ENCODE measurements at regions of chr1 and their contacts with region 1.

Region 1: DNA sequence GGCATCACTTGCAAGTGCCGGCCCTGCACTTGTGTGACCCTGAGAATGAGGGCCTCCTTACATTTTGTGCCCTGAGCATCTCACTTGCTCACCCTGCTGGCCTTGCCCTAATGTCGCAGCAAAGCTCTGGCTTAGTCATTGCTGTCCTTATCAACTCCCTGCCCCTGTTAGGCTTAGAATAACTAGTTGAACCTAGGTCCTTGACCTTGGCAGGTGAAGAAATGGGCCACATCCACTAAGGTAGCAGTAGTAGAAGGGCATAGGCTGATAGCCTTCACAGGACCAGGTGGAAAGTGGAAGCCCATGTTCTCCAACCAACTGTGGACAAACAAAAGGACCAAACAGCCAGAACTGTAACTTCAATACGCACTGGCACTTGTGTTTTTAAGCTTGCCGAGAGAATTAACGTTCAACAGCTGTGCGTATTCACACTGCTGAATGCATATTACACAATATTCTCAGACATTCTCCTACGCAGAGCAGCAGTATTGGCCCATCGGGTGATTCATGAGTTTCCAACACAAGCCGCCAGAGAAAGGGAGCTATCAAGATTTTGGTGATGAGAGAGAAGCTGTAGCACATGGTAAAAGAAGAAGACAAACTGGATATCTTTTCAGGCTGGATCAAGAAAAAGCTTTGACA is 27.7 kb upstream of the PTGFRN start:
- DNase-seq: peak; percentile 77
- H3K4me3 Mint-ChIP-seq: no peak overlapping the region
- H3K27ac Mint-ChIP-seq: no peak overlapping the region
- H3K4me1 Mint-ChIP-seq: peaks cover 12% of the 10 kb centered on the region
- H3K27me3 Mint-ChIP-seq: no peaks in the 10 kb centered on the region

Region 2: DNA sequence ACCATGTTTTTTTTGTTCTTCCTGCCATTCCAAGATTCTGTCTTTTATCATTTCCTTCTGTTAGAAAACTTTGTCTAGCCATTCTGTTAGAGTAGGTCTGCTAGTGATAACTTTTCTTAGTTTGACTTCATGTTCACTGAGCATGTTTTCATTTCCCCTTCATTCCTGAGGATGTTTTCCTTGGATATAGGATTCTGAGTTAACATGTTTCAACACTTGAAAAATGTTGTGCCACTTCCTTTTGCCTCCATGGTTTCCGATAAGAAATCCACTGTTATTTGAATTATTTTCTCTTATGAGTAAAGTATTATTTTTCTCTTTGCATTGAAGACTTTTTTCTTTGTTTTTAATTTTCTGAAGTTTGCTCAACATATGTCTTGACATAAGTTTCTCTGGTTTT is 442.3 kb before region 1 on chr1:
- CTCF ChIA-PET with region 1: no interaction called
- intact Hi-C with region 1: no loop called
- DNase-seq: no peak
- H3K4me3 Mint-ChIP-seq: no peak overlapping the region
- H3K27ac Mint-ChIP-seq: no peak overlapping the region
- H3K4me1 Mint-ChIP-seq: no peaks in the 10 kb centered on the region
- H3K27me3 Mint-ChIP-seq: no peaks in the 10 kb centered on the region

Region 3: DNA sequence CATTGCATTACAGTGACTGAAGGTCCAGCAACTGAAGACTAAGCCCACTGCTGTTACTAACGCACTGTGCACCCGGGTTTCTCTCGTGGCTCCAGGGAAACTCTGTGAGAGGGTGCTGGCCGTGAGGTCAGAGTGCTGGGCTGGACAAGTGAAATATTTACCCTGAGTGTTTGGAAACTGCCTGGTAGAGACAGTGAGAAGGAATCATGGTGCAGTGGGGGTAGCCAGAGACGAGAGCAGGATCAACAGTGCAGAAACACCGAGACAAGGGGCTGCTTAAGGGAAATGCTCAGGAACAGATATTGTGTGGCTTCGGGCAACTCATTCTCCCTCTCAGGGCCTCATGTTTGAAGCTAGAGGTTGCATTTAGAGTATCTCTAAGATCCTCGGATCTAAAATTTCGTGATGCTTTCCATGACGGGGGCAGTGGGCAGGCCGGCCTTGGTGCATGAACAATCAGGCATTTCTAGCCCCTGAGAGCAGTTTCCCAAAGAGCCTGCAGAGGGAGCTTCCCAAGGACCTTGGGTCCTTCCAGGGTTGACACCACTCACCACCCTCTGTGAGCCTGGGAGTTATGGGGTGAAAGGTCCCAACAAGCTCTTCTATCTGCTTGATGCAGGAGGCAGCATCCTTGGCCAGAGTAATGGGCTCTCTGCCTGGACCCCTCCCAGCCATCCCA is 118.1 kb before region 1 on chr1:
- CTCF ChIA-PET with region 1: interaction called, 10 read pairs
- intact Hi-C with region 1: loop called (anchors 1 kb)
- DNase-seq: peak; percentile 68
- H3K4me3 Mint-ChIP-seq: peak overlapping the region; percentile 100
- H3K27ac Mint-ChIP-seq: peak overlapping the region; percentile 100
- H3K4me1 Mint-ChIP-seq: peaks cover 87% of the 10 kb centered on the region
- H3K27me3 Mint-ChIP-seq: no peaks in the 10 kb centered on the region

Region 4: DNA sequence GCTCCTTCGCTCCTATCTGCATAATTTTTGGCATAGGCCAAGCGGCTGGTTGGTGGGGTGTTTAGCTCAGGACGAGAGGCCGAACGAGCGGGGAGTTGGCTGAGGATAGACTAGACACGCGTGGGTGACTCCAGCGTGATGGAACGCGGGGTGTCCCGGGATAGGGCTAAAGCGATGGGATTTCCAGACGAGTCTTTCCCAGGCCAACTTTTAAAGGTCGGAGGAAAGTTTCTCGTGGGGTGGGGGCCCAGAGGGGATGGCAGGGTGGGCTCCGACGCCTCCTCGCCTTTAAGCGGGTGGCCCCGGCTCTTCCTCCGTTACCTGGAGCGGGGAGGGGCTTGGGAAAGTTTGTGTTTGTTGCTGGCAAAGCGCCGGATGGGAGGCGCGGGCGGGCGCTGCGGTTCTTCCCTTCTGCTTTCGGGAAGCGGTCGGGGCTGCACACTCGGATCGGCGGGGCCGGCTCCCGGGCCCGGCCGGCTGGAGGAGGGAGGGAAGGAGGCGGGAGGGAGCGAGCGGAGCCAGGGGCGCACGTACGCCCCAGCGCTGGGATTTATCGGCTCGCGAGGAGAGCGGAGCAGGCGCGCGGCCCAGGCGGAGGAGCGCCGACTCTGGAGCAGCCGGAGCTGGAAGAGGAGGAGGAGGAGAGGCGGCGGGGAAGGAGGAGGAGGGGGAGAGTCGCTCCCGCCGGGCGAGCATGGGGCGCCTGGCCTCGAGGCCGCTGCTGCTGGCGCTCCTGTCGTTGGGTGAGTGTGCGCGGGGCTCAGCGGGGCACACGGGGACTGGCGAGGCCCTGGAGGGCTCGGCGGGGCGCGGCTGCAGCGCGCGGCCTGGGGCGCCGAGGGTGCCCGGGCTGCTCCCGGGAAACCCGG is 27.7 kb after region 1 on chr1 and contains the start of gene PTGFRN:
- CTCF ChIA-PET with region 1: interaction called, 6 read pairs
- intact Hi-C with region 1: loop called (anchors 2 kb)
- DNase-seq: peak; percentile 53
- H3K4me3 Mint-ChIP-seq: peak within 1 kb of the TSS; percentile 75
- H3K27ac Mint-ChIP-seq: peak within 1 kb of the TSS; percentile 30
- H3K4me1 Mint-ChIP-seq: peaks cover 3% of the 10 kb centered on the region
- H3K27me3 Mint-ChIP-seq: no peaks in the 10 kb centered on the region
- total RNA-seq, gene PTGFRN: 24.0 to 28.0 TPM

Region 5: DNA sequence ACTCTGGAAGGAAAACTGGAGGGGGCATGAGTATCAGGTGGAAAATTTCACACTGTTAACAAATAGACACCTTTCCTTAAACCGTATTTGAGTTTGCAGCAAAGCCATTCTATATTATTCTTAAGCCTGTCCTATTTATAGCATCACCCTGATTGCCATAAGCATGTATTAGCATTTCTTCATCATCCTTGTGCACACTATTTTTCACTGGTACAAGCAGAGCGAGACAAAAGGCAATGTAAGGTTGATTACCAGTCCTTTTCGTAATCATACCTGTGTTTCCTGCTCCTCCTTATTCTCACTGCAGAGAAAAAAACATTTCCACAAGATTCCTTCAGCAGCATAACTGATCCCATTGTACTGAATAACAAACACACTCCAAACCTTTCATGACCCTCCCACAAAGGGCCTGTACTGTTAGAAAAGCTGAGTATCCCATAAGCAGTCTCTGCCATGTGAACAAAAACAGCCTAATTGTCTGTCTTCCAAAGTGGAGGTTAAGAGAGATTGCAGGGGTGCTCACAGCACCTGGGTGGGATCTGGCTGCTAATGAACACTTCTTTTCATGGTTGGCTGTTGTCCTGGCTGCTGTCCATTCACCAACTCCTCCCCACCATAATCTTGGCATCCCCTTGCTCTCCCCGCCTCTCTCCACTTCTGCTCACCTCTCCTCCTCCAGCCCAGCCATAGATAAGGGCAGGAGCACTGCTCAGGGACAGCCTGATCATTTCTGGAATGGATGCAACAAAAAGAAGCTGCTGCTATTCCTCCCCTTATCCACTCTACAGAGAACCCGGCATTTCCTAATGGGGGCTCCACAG is 298.4 kb after region 1 on chr1:
- CTCF ChIA-PET with region 1: no interaction called
- intact Hi-C with region 1: no loop called
- DNase-seq: no peak
- H3K4me3 Mint-ChIP-seq: no peak overlapping the region
- H3K27ac Mint-ChIP-seq: no peak overlapping the region
- H3K4me1 Mint-ChIP-seq: no peaks in the 10 kb centered on the region
- H3K27me3 Mint-ChIP-seq: no peaks in the 10 kb centered on the region